Heart left ventricle (tissue), 16 donors: ENCODE measurements at regions of chr9 and their contacts with region 1.

Region 1: GRCh38 chr9:27414220-27414761 is 109.8 kb upstream of the IFNK start:
- DNase-seq: peak; percentile 66 to 86 (median 74)
- ATAC-seq: peak; percentile 56 to 93 (median 85)
- H3K4me3 ChIP-seq: peak overlapping the region in 5 of 12 donors; percentile 24 to 55 (median 49)
- H3K27ac ChIP-seq: peak overlapping the region in 7 of 12 donors; percentile 20 to 40 (median 34)
- H3K4me1 ChIP-seq: peaks cover 0 to 26% (median 6%) of the 10 kb centered on the region in 12 donors
- H3K27me3 ChIP-seq: no peaks in the 10 kb centered on the region
- CTCF ChIP-seq: no peak
- POLR2A ChIP-seq: no peak

Region 2: GRCh38 chr9:27365707-27366376 is 48.4 kb before region 1 on chr9:
- intact Hi-C with region 1: loop called in 1 of 10 experiments (anchors 5 kb)
- DNase-seq: no peak
- ATAC-seq: no peak
- H3K4me3 ChIP-seq: no peak overlapping the region
- H3K27ac ChIP-seq: no peak overlapping the region
- H3K4me1 ChIP-seq: peaks cover 0 to 36% (median 6%) of the 10 kb centered on the region in 12 donors
- H3K27me3 ChIP-seq: no peaks in the 10 kb centered on the region
- CTCF ChIP-seq: no peak
- POLR2A ChIP-seq: no peak

Region 3: GRCh38 chr9:27460226-27461023 is 46.1 kb after region 1 on chr9:
- intact Hi-C with region 1: loop called in 2 of 10 experiments (anchors 10 kb)
- DNase-seq: peak in 1 of 5 donors; percentile 38
- ATAC-seq: peak; percentile 45 to 68 (median 53)
- H3K4me3 ChIP-seq: no peak overlapping the region
- H3K27ac ChIP-seq: no peak overlapping the region
- H3K4me1 ChIP-seq: peaks cover 0 to 31% (median 13%) of the 10 kb centered on the region in 12 donors
- H3K27me3 ChIP-seq: no peaks in the 10 kb centered on the region
- CTCF ChIP-seq: no peak
- POLR2A ChIP-seq: no peak

Region 4: GRCh38 chr9:27475043-27475595 is 60.8 kb after region 1 on chr9:
- intact Hi-C with region 1: no loop called
- DNase-seq: no peak
- ATAC-seq: peak in 2 of 4 donors; percentile 21 to 57
- H3K4me3 ChIP-seq: no peak overlapping the region
- H3K27ac ChIP-seq: no peak overlapping the region
- H3K4me1 ChIP-seq: peaks cover 0 to 52% (median 14%) of the 10 kb centered on the region in 12 donors
- H3K27me3 ChIP-seq: no peaks in the 10 kb centered on the region
- CTCF ChIP-seq: no peak
- POLR2A ChIP-seq: no peak